ENCODE measurements at regions of chr6 and their contacts with region 1.

Region 1: GRCh38 chr6:41787219-41787917 is at the start of gene TOMM6:
- DNase-seq: peak; percentile 87 to 99 (median 91)
- ATAC-seq: peak; percentile 87
- H3K4me3 ChIP-seq: peak within 1 kb of the TSS; percentile 87
- H3K27ac ChIP-seq: peak within 1 kb of the TSS; percentile 93
- H3K4me1 ChIP-seq: peaks cover 30 to 33% of the 10 kb centered on the region in 2 experiments
- H3K27me3 ChIP-seq: no peaks in the 10 kb centered on the region
- CTCF ChIP-seq: peak; percentile 96 to 97 (median 97)
- EP300 ChIP-seq: peak; percentile 44; the same call in 1 of the 2 replicates
- POLR2A ChIP-seq: peak; percentile 99
- RAD21 ChIP-seq: peak in 1 of 2 experiments; percentile 22; a peak in 1 of 4 replicates
- polyA plus RNA-seq, gene TOMM6: 1,746 to 1,760 TPM

Region 2: DNA sequence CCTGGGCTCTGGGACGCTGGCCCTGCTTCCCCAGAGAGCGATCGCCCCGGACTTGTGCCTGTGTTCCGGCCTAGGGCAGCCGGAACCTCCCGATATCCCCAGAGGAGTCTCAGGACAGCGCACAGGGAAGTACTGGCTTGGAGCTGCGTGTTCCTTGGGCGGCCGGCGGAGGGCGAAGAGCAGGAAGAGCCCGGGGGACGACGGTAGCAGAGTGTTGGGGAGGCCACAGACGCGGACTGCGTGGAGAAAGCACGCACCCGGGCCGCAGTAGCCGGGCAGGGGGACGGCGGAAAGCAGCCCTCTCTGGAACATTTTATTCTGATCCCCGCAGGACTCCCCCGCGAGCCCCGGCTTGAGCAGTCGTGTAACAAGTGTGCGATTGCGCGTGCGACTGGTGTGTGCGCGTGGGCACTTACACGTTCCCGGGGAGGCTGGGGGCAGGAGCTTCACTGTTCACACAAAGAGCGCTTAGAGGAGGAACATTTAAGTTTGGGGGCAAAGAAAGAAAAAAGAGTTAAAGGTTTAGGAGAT is 415.8 kb before region 1 on chr6:
- CTCF ChIA-PET with region 1: no interaction called
- POLR2A ChIA-PET with region 1: no interaction called
- in situ Hi-C with region 1: no loop called
- intact Hi-C with region 1: no loop called
- DNase-seq: peak in 1 of 4 experiments; percentile 12
- ATAC-seq: peak; percentile 33; the same call in 1 of the 3 replicates
- H3K4me3 ChIP-seq: no peak overlapping the region
- H3K27ac ChIP-seq: no peak overlapping the region
- H3K4me1 ChIP-seq: peaks cover 0 to 26% of the 10 kb centered on the region in 2 experiments; a peak in 2 of 5 replicates
- H3K27me3 ChIP-seq: peaks cover 40 to 62% of the 10 kb centered on the region in 2 experiments
- CTCF ChIP-seq: no peak
- EP300 ChIP-seq: no peak
- POLR2A ChIP-seq: no peak
- RAD21 ChIP-seq: no peak

Region 3: DNA sequence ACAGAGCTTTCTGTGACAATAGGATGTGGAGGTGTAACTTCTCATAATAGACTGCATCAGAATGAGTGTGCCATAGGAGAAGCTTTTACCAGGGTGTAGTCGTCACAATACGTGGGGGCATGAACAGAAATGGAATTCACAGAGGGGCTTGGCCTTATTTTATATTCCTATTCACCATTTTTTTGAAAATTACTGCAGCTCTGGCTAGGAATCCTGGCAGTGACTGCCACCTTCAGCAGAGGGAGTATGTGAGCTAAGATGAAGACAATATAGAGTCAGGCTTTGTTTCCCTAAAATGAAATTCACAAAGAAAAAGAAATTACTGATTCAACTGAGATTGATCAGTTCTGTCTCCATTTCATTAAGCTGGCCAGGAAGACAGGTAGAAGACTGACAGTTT is 14.0 kb after region 1 on chr6:
- CTCF ChIA-PET with region 1: no interaction called
- POLR2A ChIA-PET with region 1: interaction called, 37 read pairs
- in situ Hi-C with region 1: no loop called
- intact Hi-C with region 1: no loop called
- DNase-seq: peak in 1 of 4 experiments; percentile 33
- ATAC-seq: peak; percentile 71
- H3K4me3 ChIP-seq: no peak overlapping the region
- H3K27ac ChIP-seq: no peak overlapping the region
- H3K4me1 ChIP-seq: peaks cover 0 to 3% of the 10 kb centered on the region in 2 experiments; a peak in 1 of 5 replicates
- H3K27me3 ChIP-seq: no peaks in the 10 kb centered on the region
- CTCF ChIP-seq: peak; percentile 54 to 71 (median 63); a peak in 5 of 6 replicates
- EP300 ChIP-seq: no peak
- POLR2A ChIP-seq: no peak
- RAD21 ChIP-seq: peak; percentile 70 to 78

Region 4: DNA sequence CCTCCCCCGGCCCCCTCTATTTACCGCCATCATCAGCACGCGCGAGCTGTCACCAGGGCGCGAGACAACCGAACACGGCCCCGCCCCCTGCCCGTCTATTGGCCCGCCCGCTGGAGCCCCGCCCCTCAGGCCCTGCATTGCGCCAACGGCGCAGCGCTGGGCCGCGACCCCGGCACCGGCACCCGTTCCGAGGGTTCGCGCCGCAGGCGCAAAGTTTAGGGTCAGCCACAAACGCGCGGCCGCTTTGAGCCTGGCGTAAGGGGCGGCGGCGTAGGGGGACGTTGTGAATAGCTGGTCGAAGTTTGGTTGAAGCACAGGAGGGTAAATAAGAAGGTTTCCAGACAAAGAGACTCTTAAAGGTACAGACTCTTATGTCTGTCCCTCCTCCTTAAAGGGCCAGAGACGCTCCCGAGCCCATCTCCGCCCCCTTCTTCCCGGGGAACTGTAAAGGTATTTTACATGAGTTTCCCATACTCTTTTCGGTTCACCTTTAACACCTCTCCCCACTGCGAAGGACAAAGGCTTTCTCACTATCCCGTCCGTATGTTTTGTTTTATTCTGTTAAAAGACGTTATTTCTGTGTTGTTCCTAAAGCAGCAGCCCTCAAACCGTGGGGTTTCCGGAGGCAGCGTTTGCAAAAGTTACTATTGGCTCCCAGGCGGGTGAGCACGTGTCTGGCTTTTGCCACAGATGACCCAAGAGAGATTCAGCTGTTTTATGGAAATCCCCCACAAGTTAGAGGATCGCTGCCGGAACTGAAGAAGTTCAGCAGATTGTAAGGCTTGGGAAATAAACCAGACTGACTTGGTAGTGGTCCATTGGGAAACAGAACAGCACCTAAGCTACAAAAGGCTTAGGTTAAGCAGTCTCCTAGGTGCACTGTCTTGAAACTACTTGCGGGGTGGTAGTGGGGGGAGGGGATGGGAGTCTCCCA is 108.2 kb after region 1 on chr6 and contains the start of gene USP49:
- CTCF ChIA-PET with region 1: no interaction called
- POLR2A ChIA-PET with region 1: interaction called, 3 read pairs
- in situ Hi-C with region 1: no loop called
- intact Hi-C with region 1: loop called (anchors 1 kb)
- DNase-seq: peak; percentile 97 to 98 (median 98)
- ATAC-seq: peak; percentile 96
- H3K4me3 ChIP-seq: peak within 1 kb of the TSS; percentile 56
- H3K27ac ChIP-seq: peak within 1 kb of the TSS; percentile 79
- H3K4me1 ChIP-seq: peaks cover 8 to 11% of the 10 kb centered on the region in 2 experiments
- H3K27me3 ChIP-seq: no peaks in the 10 kb centered on the region
- CTCF ChIP-seq: peak in 1 of 3 experiments; percentile 1; a peak in 1 of 6 replicates
- EP300 ChIP-seq: no peak
- POLR2A ChIP-seq: peak; percentile 85
- RAD21 ChIP-seq: no peak
- polyA plus RNA-seq, gene USP49: 1.0 to 1.6 TPM

Region 5: GRCh38 chr6:41920921-41921711 is 133.7 kb after region 1 on chr6 and contains the starts of genes BYSL and MED20:
- CTCF ChIA-PET with region 1: interaction called, 9 read pairs
- POLR2A ChIA-PET with region 1: interaction called, 7 read pairs
- in situ Hi-C with region 1: no loop called
- intact Hi-C with region 1: loop called (anchors 1 kb)
- DNase-seq: peak; percentile 95 to 98 (median 96)
- ATAC-seq: peak; percentile 89
- H3K4me3 ChIP-seq: peak within 1 kb of the TSS; percentile 82
- H3K27ac ChIP-seq: peak within 1 kb of the TSS; percentile 98
- H3K4me1 ChIP-seq: peaks cover 14 to 16% of the 10 kb centered on the region in 2 experiments; a peak in 4 of 5 replicates
- H3K27me3 ChIP-seq: no peaks in the 10 kb centered on the region
- CTCF ChIP-seq: peak; percentile 91 to 99 (median 98)
- EP300 ChIP-seq: peak; percentile 43; the same call in 1 of the 2 replicates
- POLR2A ChIP-seq: peak; percentile 88
- RAD21 ChIP-seq: peak in 1 of 2 experiments; percentile 20; a peak in 3 of 4 replicates
- polyA plus RNA-seq, gene BYSL: 22.2 to 25.8 TPM
- polyA plus RNA-seq, gene MED20: 63.8 to 80.9 TPM

Region 6: GRCh38 chr6:41941280-41942066 is 154.1 kb after region 1 on chr6 and contains the start of gene CCND3:
- CTCF ChIA-PET with region 1: no interaction called
- POLR2A ChIA-PET with region 1: interaction called, 10 read pairs
- in situ Hi-C with region 1: no loop called
- intact Hi-C with region 1: loop called (anchors 2 kb)
- DNase-seq: peak; percentile 92 to 98 (median 94)
- ATAC-seq: peak; percentile 84
- H3K4me3 ChIP-seq: peak within 1 kb of the TSS; percentile 81
- H3K27ac ChIP-seq: peak within 1 kb of the TSS; percentile 72
- H3K4me1 ChIP-seq: peaks cover 40 to 55% of the 10 kb centered on the region in 2 experiments
- H3K27me3 ChIP-seq: no peaks in the 10 kb centered on the region
- CTCF ChIP-seq: peak in 2 of 3 experiments; percentile 6 to 12; a peak in 1 of 6 replicates
- EP300 ChIP-seq: 0 out of 2 replicates have a peak, but pooled peaks have one; percentile 8
- POLR2A ChIP-seq: peak; percentile 70
- RAD21 ChIP-seq: no peak
- polyA plus RNA-seq, gene CCND3: 21.5 to 24.7 TPM

Region 7: DNA sequence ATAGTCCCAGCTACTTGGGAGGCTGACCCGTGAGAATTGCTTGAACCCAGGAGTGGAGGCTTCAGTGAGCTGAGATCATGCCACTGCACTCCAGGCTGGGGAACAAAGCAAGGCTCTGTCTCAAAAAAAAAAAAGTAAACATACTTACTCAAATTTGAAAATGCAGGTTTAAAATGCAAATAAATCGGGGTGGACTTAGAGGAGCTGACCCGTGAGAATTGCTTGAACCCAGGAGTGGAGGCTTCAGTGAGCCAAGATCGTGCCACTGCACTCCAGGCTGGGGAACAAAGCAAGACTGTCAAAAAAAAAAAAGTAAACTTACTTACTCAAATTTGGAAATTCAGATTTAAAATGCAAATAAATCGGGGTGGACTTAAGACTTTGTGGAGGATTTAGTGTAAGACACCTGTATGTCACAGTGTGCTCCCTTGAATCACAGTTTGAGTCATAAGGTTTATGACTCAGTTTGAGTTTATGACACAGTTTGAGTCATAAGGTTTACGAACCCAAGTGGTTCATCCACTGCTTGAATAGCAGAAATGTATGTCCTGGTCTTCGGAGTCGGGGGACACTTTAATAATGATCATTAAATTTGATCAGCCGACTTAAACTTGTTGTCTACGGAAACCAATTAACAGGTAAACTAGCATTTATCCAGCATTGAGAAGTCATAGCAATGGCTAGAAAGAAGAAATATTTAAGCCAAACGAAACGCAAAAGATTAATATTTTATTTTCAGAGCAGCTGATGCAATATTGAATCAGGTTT is 437.0 kb after region 1 on chr6:
- CTCF ChIA-PET with region 1: interaction called, 5 read pairs
- POLR2A ChIA-PET with region 1: interaction called, 3 read pairs
- in situ Hi-C with region 1: loop called (anchors 10 kb)
- intact Hi-C with region 1: loop called (anchors 5 kb)
- DNase-seq: peak in 1 of 4 experiments; percentile 50
- ATAC-seq: no peak
- H3K4me3 ChIP-seq: no peak overlapping the region
- H3K27ac ChIP-seq: no peak overlapping the region
- H3K4me1 ChIP-seq: peaks cover 11 to 17% of the 10 kb centered on the region in 2 experiments; a peak in 4 of 5 replicates
- H3K27me3 ChIP-seq: no peaks in the 10 kb centered on the region
- CTCF ChIP-seq: no peak
- EP300 ChIP-seq: no peak
- POLR2A ChIP-seq: no peak
- RAD21 ChIP-seq: no peak

Measured in K562 (cell line).